ENCODE measurements at regions of chr11 and their contacts with region 1.

Region 1: DNA sequence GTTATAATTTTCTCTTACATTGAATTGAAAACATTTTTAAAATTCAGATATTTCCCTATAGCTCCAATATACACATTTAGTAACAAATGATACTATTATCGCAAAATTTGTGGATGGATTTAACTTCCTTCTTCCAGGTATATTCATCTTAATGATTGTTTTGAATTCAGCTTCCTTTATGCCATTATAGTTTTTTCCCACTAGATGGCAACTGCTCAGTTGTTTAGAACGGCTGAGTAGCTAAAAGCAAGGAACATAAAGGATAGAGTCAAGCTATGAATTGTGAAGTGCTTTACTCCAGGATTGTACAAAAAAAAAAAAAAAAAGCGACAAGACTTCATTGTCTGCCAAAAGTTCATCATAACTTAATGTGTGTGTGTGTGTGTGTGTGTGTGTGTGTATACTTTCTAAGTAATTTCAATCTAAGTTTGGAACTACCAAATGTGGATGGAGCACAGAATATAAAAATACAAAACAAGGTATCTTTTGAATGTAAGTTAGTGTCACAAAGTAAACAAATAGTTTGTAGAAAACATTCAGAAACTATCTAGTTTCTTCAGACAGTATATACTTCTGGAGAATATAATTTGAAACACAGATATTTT is 846.4 kb downstream of the DLG2 start:
- DNase-seq: peak; percentile 15
- ATAC-seq: no peak
- H3K4me3 ChIP-seq: no peak overlapping the region
- H3K27ac ChIP-seq: no peak overlapping the region
- H3K4me1 ChIP-seq: no peaks in the 10 kb centered on the region
- H3K27me3 ChIP-seq: no peaks in the 10 kb centered on the region
- CTCF ChIP-seq: peak; percentile 50
- POLR2A ChIP-seq: no peak
- RAD21 ChIP-seq: peak; percentile 53

Region 2: DNA sequence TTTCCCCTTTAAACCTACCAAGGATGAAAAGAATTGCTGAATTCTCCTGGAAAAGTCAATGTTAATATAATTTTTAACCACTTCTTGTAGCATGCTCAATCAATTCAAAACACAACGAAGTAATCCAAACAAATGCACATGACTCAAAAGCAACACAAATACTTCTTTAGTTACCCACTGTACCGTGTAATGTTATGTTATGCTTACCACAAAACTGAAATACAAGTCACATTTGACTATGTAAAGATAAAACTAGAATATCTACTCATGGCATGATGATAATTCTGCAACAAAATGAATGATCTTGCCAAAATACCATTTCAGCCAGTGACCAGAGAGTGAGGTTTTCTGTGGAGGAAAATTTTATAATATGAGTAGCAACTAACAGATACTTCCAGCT is 259.4 kb after region 1 on chr11:
- CTCF ChIA-PET with region 1: no interaction called
- POLR2A ChIA-PET with region 1: no interaction called
- dilution Hi-C with region 1: no loop called
- in situ Hi-C with region 1: no loop called
- intact Hi-C with region 1: no loop called
- DNase-seq: peak; percentile 40
- ATAC-seq: peak; percentile 69
- H3K4me3 ChIP-seq: no peak overlapping the region
- H3K27ac ChIP-seq: no peak overlapping the region
- H3K4me1 ChIP-seq: no peaks in the 10 kb centered on the region
- H3K27me3 ChIP-seq: no peaks in the 10 kb centered on the region
- CTCF ChIP-seq: no peak
- POLR2A ChIP-seq: no peak
- RAD21 ChIP-seq: no peak

Region 3: GRCh38 chr11:85589373-85589772 is 808.6 kb after region 1 on chr11:
- CTCF ChIA-PET with region 1: interaction called, 4 read pairs
- POLR2A ChIA-PET with region 1: no interaction called
- dilution Hi-C with region 1: no loop called
- in situ Hi-C with region 1: loop called (anchors 10 kb)
- intact Hi-C with region 1: loop called (anchors 5 kb)
- DNase-seq: no peak
- ATAC-seq: no peak
- H3K4me3 ChIP-seq: no peak overlapping the region
- H3K27ac ChIP-seq: no peak overlapping the region
- H3K4me1 ChIP-seq: no peaks in the 10 kb centered on the region
- H3K27me3 ChIP-seq: no peaks in the 10 kb centered on the region
- CTCF ChIP-seq: no peak
- POLR2A ChIP-seq: no peak
- RAD21 ChIP-seq: no peak

Region 4: DNA sequence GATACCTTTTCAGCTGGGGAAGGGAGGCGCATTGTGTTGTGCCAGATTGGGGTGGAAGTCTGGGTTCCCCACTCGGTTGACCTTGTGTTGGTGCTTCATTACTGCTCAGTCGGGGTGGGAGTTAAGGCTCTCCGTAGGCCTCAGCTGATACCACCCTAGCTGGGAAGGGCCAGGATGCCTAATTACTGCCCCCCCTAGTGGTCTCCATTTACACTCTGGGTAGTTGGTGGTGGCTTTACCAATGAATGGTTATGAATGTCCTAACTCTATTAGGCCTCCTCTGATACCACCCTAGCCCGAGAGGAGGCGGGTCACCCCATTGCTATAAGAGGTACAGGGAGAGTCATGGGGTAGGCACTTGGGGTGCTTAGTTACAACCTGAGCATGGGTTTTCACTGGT is 1493.7 kb after region 1 on chr11:
- CTCF ChIA-PET with region 1: no interaction called
- POLR2A ChIA-PET with region 1: no interaction called
- dilution Hi-C with region 1: no loop called
- in situ Hi-C with region 1: no loop called
- intact Hi-C with region 1: loop called (anchors 10 kb)
- DNase-seq: no peak
- ATAC-seq: no peak
- H3K4me3 ChIP-seq: no peak overlapping the region
- H3K27ac ChIP-seq: no peak overlapping the region
- H3K4me1 ChIP-seq: peaks cover 3% of the 10 kb centered on the region; the same call in 1 of the 2 replicates
- H3K27me3 ChIP-seq: no peaks in the 10 kb centered on the region
- CTCF ChIP-seq: 0 out of 2 replicates have a peak, but pooled peaks have one; percentile 2
- POLR2A ChIP-seq: no peak
- RAD21 ChIP-seq: no peak

Measured in IMR-90 (cell line).